Heart left ventricle (tissue), 16 donors: ENCODE measurements at regions of chr1 and their contacts with region 1.

Region 1: DNA sequence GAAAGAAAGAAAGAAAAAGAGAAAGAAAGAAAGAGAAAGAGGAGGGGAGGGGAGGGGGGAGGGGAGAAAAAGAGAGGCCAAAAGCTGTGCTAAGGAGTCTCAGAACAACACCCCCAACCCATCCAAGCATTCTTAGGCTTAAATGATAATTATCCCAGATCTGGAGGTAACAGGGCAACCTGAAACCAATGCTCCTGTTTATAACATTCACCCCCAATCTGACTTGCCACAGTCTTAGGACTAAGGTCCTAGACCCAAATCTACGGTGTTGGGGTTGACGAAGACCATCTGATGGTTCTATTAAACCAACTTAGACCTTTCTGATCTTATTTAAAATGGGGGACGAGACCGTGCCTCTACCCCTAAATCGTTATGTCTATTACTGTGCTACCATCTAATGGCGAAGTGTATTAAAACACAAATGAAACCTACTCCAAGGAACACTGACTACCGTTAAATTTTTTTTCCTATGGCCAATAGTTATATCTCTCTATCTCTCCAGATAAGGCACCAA is 119.3 kb upstream of the CDC42BPA start:
- DNase-seq: no peak
- ATAC-seq: peak; percentile 26 to 81 (median 72)
- H3K4me3 ChIP-seq: peak overlapping the region in 10 of 12 donors; percentile 31 to 59 (median 38)
- H3K27ac ChIP-seq: peak overlapping the region in 2 of 12 donors; percentile 31 to 51
- H3K4me1 ChIP-seq: peaks cover 0 to 69% (median 30%) of the 10 kb centered on the region in 12 donors
- H3K27me3 ChIP-seq: no peaks in the 10 kb centered on the region
- CTCF ChIP-seq: peak; percentile 22 to 74 (median 56)
- POLR2A ChIP-seq: no peak

Region 2: GRCh38 chr1:226626577-226626956 is 811.0 kb before region 1 on chr1:
- intact Hi-C with region 1: loop called in 5 of 10 experiments (anchors 5 to 10 kb)
- DNase-seq: peak; percentile 75 to 83 (median 76)
- ATAC-seq: peak; percentile 80 to 90 (median 88)
- H3K4me3 ChIP-seq: no peak overlapping the region
- H3K27ac ChIP-seq: peak overlapping the region in 1 of 12 donors; percentile 32
- H3K4me1 ChIP-seq: peaks cover 0 to 10% (median 6%) of the 10 kb centered on the region in 12 donors
- H3K27me3 ChIP-seq: no peaks in the 10 kb centered on the region
- CTCF ChIP-seq: peak; percentile 94 to 99 (median 97)
- POLR2A ChIP-seq: no peak

Region 3: GRCh38 chr1:226912587-226913176 is 524.9 kb before region 1 on chr1:
- intact Hi-C with region 1: loop called in 7 of 10 experiments (anchors 2 to 10 kb)
- DNase-seq: peak; percentile 54 to 79 (median 69)
- ATAC-seq: peak; percentile 65 to 89 (median 85)
- H3K4me3 ChIP-seq: no peak overlapping the region
- H3K27ac ChIP-seq: peak overlapping the region in 4 of 12 donors; percentile 9 to 48 (median 26)
- H3K4me1 ChIP-seq: peaks cover 0 to 13% (median 1%) of the 10 kb centered on the region in 12 donors
- H3K27me3 ChIP-seq: no peaks in the 10 kb centered on the region
- CTCF ChIP-seq: peak; percentile 42 to 78 (median 66)
- POLR2A ChIP-seq: no peak

Region 4: GRCh38 chr1:227219715-227220292 is 217.7 kb before region 1 on chr1:
- intact Hi-C with region 1: loop called in 1 of 10 experiments (anchors 10 kb)
- DNase-seq: no peak
- ATAC-seq: peak in 3 of 4 donors; percentile 59 to 78 (median 66)
- H3K4me3 ChIP-seq: no peak overlapping the region
- H3K27ac ChIP-seq: peak overlapping the region in 4 of 12 donors; percentile 7 to 27 (median 24)
- H3K4me1 ChIP-seq: peaks cover 0 to 46% (median 18%) of the 10 kb centered on the region in 12 donors
- H3K27me3 ChIP-seq: no peaks in the 10 kb centered on the region
- CTCF ChIP-seq: peak in 4 of 12 donors; percentile 6 to 26 (median 10)
- POLR2A ChIP-seq: no peak

Region 5: GRCh38 chr1:227357171-227357880 is 80.2 kb before region 1 on chr1:
- intact Hi-C with region 1: loop called in 2 of 10 experiments (anchors 5 kb)
- DNase-seq: peak; percentile 72 to 90 (median 78)
- ATAC-seq: peak; percentile 93 to 99 (median 98)
- H3K4me3 ChIP-seq: no peak overlapping the region
- H3K27ac ChIP-seq: peak overlapping the region; percentile 49 to 85 (median 75)
- H3K4me1 ChIP-seq: peaks cover 0 to 28% (median 19%) of the 10 kb centered on the region in 12 donors
- H3K27me3 ChIP-seq: no peaks in the 10 kb centered on the region
- CTCF ChIP-seq: peak in 1 of 12 donors; percentile 7
- POLR2A ChIP-seq: no peak